ENCODE measurements at regions of chr18 and their contacts with region 1.

Region 1: GRCh38 chr18:61333746-61334490 is 688 bp downstream of the CDH20 start:
- DNase-seq: no peak
- H3K4me3 ChIP-seq: peak overlapping the region in 2 of 4 donors; percentile 20 to 38
- H3K27ac ChIP-seq: no peak overlapping the region
- H3K4me1 ChIP-seq: peaks cover 0 to 22% (median 11%) of the 10 kb centered on the region in 4 donors
- H3K27me3 ChIP-seq: peaks cover 47% of the 10 kb centered on the region
- CTCF ChIP-seq: no peak
- EP300 ChIP-seq: no peak
- POLR2A ChIP-seq: no peak

Region 2: GRCh38 chr18:61502472-61502871 is 168.6 kb after region 1 on chr18:
- in situ Hi-C with region 1: loop called in 3 of 4 experiments (anchors 10 to 25 kb)
- intact Hi-C with region 1: no loop called
- DNase-seq: peak; percentile 17
- H3K4me3 ChIP-seq: no peak overlapping the region
- H3K27ac ChIP-seq: no peak overlapping the region
- H3K4me1 ChIP-seq: no peaks in the 10 kb centered on the region
- H3K27me3 ChIP-seq: no peaks in the 10 kb centered on the region
- CTCF ChIP-seq: peak; percentile 53 to 68 (median 63)
- EP300 ChIP-seq: no peak
- POLR2A ChIP-seq: no peak

Region 3: GRCh38 chr18:61531182-61531581 is 197.3 kb after region 1 on chr18:
- in situ Hi-C with region 1: no loop called
- intact Hi-C with region 1: no loop called
- DNase-seq: no peak
- H3K4me3 ChIP-seq: no peak overlapping the region
- H3K27ac ChIP-seq: no peak overlapping the region
- H3K4me1 ChIP-seq: no peaks in the 10 kb centered on the region
- H3K27me3 ChIP-seq: no peaks in the 10 kb centered on the region
- CTCF ChIP-seq: no peak
- EP300 ChIP-seq: no peak
- POLR2A ChIP-seq: no peak

Measured in transverse colon (tissue), 4 donors.